ENCODE measurements at regions of chr18 and their contacts with region 1.

Region 1: GRCh38 chr18:72762515-72763122 is 105.2 kb downstream of the NETO1 start:
- DNase-seq: peak; percentile 69
- ATAC-seq: peak; percentile 76
- H3K4me3 ChIP-seq: no peak overlapping the region
- H3K27ac ChIP-seq: no peak overlapping the region
- H3K4me1 ChIP-seq: no peaks in the 10 kb centered on the region
- H3K27me3 ChIP-seq: no peaks in the 10 kb centered on the region
- CTCF ChIP-seq: peak; percentile 85
- POLR2A ChIP-seq: no peak
- RAD21 ChIP-seq: peak; percentile 90

Region 2: DNA sequence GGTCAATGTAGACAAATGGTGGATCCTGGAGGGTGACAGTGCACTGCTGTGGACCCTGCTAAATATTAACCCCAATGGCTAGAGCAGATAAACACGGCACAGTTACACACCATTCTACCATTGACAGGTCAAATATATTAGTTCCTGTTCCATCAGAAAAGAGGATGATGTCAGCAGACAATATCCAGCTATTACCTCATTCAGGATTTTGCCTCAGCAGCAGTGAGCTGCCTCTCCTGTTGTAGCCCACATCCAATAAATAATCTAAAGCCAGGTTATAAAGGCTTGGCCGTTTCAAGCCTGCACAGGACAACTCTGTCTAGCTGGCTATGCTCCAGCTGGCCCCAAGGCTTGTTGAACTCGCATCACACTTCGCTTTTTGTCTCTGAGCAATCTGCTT is 136.7 kb after region 1 on chr18:
- CTCF ChIA-PET with region 1: no interaction called
- POLR2A ChIA-PET with region 1: no interaction called
- dilution Hi-C with region 1: no loop called
- in situ Hi-C with region 1: no loop called
- intact Hi-C with region 1: no loop called
- DNase-seq: no peak
- ATAC-seq: no peak
- H3K4me3 ChIP-seq: no peak overlapping the region
- H3K27ac ChIP-seq: no peak overlapping the region
- H3K4me1 ChIP-seq: no peaks in the 10 kb centered on the region
- H3K27me3 ChIP-seq: no peaks in the 10 kb centered on the region
- CTCF ChIP-seq: no peak
- POLR2A ChIP-seq: no peak
- RAD21 ChIP-seq: no peak

Region 3: GRCh38 chr18:73136134-73136533 is 373.5 kb after region 1 on chr18:
- CTCF ChIA-PET with region 1: interaction called, 11 read pairs
- POLR2A ChIA-PET with region 1: no interaction called
- dilution Hi-C with region 1: no loop called
- in situ Hi-C with region 1: no loop called
- intact Hi-C with region 1: loop called (anchors 2 kb)
- DNase-seq: no peak
- ATAC-seq: peak; percentile 56; the same call in 1 of the 2 replicates
- H3K4me3 ChIP-seq: no peak overlapping the region
- H3K27ac ChIP-seq: no peak overlapping the region
- H3K4me1 ChIP-seq: no peaks in the 10 kb centered on the region
- H3K27me3 ChIP-seq: no peaks in the 10 kb centered on the region
- CTCF ChIP-seq: peak; percentile 37; the same call in 1 of the 2 replicates
- POLR2A ChIP-seq: no peak
- RAD21 ChIP-seq: peak; percentile 28; the same call in 1 of the 2 replicates

Region 4: DNA sequence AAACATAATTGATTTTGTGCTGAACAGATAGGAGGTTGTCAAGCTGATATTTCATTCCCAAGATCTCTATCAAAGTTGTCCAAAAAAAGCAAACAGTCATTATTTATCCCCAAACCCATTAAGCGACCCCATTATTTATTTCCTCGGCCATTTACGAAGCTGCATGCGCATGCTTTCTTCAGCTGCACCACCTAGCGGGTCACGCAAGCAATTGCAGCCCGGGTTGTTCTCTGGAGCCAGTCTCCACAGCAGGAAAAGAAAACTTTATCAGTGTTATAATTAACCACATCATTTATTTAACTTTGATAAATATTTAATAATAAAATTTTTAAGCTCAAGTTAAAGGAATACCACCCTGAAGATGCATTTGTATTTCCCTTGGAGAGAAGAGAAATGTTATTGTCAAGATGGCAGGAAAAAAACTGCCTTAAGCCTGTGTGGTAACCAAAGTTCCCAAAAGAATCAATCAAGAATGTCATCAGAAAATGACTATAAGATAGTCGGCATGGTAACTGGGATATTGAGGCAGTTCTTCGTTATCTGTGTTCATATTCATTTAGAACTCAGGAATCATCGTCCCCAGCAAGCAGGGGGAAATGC is 1080.3 kb after region 1 on chr18:
- CTCF ChIA-PET with region 1: no interaction called
- POLR2A ChIA-PET with region 1: no interaction called
- dilution Hi-C with region 1: no loop called
- in situ Hi-C with region 1: loop called (anchors 25 kb)
- intact Hi-C with region 1: loop called (anchors 2 kb)
- DNase-seq: peak; percentile 65
- ATAC-seq: peak; percentile 91
- H3K4me3 ChIP-seq: no peak overlapping the region
- H3K27ac ChIP-seq: no peak overlapping the region
- H3K4me1 ChIP-seq: 0 out of 2 replicates have a peak, but pooled peaks cover 4% of the 10 kb centered on the region
- H3K27me3 ChIP-seq: no peaks in the 10 kb centered on the region
- CTCF ChIP-seq: peak; percentile 91
- POLR2A ChIP-seq: no peak
- RAD21 ChIP-seq: peak; percentile 88

Region 5: DNA sequence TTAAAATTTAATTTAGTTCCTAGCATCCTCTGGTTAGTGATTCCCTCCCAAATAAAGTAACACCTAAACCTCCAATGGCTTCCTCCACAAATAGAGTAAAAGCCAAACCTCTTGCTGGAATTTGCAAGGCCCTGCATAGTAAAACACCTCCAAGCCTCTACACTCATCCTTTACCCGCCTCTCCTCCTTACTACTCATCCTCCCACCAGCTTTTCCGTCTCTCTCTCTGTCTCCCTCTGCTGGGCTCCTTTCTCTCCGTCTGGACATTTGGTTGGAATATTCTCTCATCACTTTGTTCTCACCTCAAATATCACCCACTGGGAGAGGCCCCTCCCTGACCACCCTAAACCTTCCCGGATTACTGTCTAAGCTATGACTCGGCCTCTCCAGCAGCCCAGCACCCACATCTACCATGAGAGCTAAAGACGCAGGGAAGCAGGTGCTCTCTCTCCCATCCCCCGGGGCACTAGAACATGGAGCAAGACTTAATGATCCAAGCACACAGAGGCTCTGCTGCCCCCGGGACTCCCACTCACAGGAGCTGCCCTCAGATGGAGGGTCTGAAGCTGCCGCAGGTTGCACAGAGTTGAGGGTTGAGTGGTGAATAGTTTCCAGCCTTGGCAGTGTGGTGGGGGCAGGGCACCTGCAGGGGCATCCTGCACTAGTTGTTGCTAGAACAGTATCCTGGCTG is 1217.8 kb after region 1 on chr18:
- CTCF ChIA-PET with region 1: no interaction called
- POLR2A ChIA-PET with region 1: no interaction called
- dilution Hi-C with region 1: no loop called
- in situ Hi-C with region 1: no loop called
- intact Hi-C with region 1: loop called (anchors 1 kb)
- DNase-seq: peak; percentile 25
- ATAC-seq: peak; percentile 50
- H3K4me3 ChIP-seq: no peak overlapping the region
- H3K27ac ChIP-seq: no peak overlapping the region
- H3K4me1 ChIP-seq: peaks cover 2% of the 10 kb centered on the region; the same call in 1 of the 2 replicates
- H3K27me3 ChIP-seq: no peaks in the 10 kb centered on the region
- CTCF ChIP-seq: peak; percentile 44
- POLR2A ChIP-seq: no peak
- RAD21 ChIP-seq: peak; percentile 39; the same call in 1 of the 2 replicates

Region 6: DNA sequence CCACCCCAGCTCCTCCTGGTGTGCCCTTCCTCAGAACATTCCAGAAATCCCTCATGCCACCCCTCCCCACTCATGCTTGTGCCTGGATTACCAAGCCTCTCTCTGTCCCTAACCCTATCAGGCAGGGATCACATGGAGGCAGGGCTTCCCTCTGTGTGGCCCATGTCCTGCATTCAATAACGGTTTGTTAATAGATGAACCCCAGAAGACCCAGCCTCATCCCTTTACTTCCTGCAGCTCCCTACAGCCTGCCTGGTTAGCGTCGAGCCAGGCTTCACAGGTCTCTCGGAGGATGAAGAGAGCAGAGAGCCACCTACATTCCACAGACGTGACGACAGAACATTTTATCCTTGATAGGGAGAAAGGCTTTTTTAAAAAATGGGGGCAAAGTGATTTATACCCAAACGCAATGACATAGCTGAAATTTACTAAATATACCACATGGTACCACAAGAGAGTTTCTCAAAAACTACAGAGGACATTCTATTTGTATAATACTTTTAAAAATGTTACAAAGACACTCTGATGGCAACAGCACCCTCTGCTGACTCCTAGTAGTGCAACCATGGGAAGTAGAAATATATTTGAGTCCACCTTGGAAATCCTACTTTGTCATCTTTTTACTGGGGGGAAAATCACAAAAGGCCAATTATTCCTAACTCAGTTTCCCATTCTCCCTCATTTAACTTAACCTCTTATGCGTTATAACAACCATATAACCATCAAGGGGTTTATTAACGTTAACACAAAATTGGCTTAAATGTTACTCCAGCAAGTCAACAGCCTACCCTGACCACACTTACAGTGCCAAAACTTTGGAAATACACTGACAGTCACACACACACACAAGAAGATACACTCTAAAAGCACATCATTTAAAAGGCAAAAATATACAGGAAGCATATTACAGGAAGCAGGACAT is 1354.3 kb after region 1 on chr18:
- CTCF ChIA-PET with region 1: interaction called, 7 read pairs
- POLR2A ChIA-PET with region 1: no interaction called
- dilution Hi-C with region 1: no loop called
- in situ Hi-C with region 1: loop called (anchors 5 kb)
- intact Hi-C with region 1: loop called (anchors 1 kb)
- DNase-seq: peak; percentile 65
- ATAC-seq: peak; percentile 63
- H3K4me3 ChIP-seq: no peak overlapping the region
- H3K27ac ChIP-seq: peak overlapping the region; percentile 20; the same call in 1 of the 2 replicates
- H3K4me1 ChIP-seq: peaks cover 11% of the 10 kb centered on the region
- H3K27me3 ChIP-seq: no peaks in the 10 kb centered on the region
- CTCF ChIP-seq: peak; percentile 89
- POLR2A ChIP-seq: no peak
- RAD21 ChIP-seq: peak; percentile 85

Region 7: DNA sequence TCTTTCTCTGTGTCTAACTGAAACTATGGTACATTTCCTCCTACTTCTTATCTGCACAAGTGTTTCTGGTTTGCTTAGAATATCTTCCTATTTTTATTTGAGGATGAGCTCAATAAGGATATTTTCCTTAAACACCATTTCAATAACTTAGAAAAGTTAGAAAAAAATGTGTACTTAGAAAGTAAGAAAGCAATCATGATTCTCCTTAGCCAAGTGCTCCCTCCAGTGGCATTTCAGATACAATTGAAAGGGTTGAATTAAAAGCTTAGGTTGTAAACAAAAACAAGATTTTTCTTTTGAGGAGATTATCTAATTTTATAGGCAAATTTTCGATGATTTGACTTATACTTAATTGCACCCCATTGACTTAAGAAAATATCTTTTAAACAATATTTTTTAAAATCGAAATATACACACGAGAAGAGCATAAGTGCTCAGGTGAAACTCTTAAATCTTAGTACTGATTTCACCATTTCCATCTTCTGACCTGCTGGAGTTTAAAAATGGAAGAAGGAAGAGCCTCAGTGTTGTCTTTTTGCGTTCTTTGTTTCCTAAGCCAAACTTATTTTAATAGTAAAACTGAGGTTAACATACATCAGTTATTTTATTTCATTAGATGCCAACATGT is 1579.9 kb after region 1 on chr18:
- CTCF ChIA-PET with region 1: no interaction called
- POLR2A ChIA-PET with region 1: no interaction called
- dilution Hi-C with region 1: no loop called
- in situ Hi-C with region 1: no loop called
- intact Hi-C with region 1: loop called (anchors 2 kb)
- DNase-seq: peak; percentile 77
- ATAC-seq: peak; percentile 54
- H3K4me3 ChIP-seq: no peak overlapping the region
- H3K27ac ChIP-seq: no peak overlapping the region
- H3K4me1 ChIP-seq: no peaks in the 10 kb centered on the region; the same call in 1 of the 2 replicates
- H3K27me3 ChIP-seq: peaks cover 2% of the 10 kb centered on the region; the same call in 1 of the 2 replicates
- CTCF ChIP-seq: peak; percentile 77
- POLR2A ChIP-seq: no peak
- RAD21 ChIP-seq: peak; percentile 88

Measured in IMR-90 (cell line).